AG04449 (cell line): ENCODE measurements at regions of chr15 and their contacts with region 1.

Region 1: DNA sequence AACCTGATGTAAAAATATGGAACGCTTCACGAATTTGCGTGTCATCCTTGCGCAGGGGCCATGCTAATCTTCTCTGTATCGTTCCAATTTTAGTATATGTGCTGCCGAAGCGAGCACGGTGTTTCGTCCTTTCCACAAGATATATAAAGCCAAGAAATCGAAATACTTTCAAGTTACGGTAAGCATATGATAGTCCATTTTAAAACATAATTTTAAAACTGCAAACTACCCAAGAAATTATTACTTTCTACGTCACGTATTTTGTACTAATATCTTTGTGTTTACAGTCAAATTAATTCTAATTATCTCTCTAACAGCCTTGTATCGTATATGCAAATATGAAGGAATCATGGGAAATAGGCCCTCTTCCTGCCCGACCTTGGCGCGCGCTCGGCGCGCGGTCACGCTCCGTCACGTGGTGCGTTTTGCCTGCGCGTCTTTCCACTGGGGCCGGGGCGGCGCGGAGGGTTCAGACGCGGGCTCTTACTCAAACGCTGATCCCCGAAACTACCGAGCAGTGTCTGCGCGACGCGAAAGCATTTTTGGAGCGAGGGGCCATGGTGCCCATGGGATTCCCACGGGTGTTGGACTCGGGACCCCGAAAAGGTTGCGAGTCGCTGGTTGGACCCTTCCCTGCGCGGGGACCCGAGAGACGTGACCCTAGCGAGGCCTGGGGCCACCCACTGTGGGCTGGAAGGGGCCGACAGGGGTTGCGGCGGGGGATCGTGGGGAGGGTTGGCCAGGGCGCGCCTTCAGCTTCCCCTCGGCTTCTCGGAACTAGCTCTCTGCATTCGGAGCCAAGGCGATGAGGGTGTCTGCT is at the start of gene RNU6-1:
- DNase-seq: peak; percentile 52
- H3K4me3 ChIP-seq: peak within 1 kb of the TSS; percentile 96
- CTCF ChIP-seq: no peak

Region 2: DNA sequence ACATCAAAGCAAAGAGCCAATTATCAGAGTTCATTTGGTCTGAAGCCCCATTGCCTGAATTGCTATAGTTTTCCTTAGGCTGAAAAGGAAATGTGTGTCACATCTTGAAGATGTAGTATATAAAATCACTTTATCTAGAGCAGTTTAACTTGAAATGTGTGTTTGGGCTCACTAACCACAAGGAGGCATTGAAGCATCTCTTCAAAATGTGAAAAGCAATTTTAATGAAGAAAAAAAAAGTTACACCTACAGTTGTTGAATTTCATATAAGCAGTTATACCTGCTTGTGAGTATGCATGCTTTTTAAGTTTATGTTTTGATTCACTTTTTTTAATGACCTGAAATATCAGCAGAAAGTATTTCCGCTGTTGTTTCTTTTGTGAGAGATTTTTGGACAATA is 456.2 kb before region 1 on chr15:
- CTCF ChIA-PET with region 1: interaction called, 14 read pairs
- POLR2A ChIA-PET with region 1: no interaction called
- DNase-seq: no peak
- H3K4me3 ChIP-seq: no peak overlapping the region
- CTCF ChIP-seq: no peak

Region 3: DNA sequence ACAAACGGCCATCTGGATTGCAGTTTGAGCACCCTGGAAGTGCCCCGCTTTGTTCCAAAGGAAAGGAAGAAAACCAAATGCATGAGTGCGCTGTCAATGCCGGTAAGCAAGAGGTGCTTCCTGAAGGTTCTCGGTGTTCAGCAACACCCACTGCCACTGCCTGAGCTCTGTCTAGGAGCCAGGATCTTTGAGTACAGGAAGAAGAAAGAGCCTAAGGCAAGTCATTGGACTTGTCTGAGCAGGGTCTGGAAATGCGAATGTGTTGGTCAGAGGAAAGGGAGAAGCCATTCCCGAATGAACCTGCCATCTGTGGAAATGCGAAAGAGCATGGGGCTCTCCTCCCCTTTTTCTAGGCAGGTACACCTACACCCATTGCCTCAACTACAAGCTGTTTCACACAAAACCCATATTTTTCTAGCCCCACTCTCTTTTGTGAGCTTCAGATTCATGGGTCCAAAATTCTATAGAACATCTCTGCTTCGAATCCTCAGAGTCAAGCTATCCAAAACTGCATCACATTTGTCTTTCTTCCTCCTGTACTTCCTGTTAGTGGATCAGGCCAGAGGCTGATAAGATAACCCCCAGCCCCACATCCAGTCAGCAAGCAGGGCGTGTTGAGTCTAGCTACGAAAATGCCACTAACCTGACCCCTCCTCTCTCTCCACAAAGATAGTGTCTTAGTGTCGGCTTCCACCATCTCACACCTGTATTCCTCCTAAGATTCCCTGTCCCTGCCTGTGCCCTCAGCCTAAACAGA is 374.8 kb before region 1 on chr15:
- CTCF ChIA-PET with region 1: interaction called, 149 read pairs
- POLR2A ChIA-PET with region 1: no interaction called
- DNase-seq: no peak
- H3K4me3 ChIP-seq: no peak overlapping the region
- CTCF ChIP-seq: no peak

Region 4: DNA sequence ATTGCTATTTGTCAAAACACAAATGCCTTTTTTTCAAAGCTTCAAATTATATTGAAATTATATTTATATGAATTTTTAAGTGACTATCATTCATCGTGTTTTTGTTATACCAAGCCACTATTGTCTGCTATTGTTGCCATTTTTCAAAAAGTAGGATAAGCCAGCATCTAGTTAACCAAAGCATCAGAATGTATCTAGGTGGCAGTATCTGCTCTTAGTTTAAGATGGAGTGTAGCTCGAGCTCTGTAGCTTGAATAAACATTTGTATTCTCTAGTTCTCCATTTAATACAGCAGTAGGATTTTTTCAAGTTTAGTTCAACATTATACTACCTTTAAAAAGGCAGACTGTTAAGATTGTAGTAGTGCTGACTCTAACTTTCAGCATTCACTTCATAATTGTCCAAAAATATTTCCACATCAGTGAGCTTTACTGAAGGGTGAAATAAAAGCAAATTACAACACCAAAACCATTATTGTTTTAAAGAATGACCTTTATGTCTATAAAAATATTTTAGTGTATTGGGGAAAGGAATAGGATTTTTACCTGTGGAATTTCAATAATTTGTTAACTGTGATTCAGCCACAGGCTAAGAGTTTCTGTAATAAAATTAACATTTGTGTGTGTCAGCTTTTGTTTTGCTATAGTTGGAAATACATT is 338.8 kb before region 1 on chr15:
- CTCF ChIA-PET with region 1: interaction called, 57 read pairs
- POLR2A ChIA-PET with region 1: no interaction called
- DNase-seq: no peak
- H3K4me3 ChIP-seq: no peak overlapping the region
- CTCF ChIP-seq: peak; percentile 43